Activated naive CD4-positive, alpha-beta T cell treated with anti-CD3 and anti-CD28 coated beads for 36 hours (primary cell): ENCODE measurements at regions of chr1 and their contacts with region 1.

Region 1: DNA sequence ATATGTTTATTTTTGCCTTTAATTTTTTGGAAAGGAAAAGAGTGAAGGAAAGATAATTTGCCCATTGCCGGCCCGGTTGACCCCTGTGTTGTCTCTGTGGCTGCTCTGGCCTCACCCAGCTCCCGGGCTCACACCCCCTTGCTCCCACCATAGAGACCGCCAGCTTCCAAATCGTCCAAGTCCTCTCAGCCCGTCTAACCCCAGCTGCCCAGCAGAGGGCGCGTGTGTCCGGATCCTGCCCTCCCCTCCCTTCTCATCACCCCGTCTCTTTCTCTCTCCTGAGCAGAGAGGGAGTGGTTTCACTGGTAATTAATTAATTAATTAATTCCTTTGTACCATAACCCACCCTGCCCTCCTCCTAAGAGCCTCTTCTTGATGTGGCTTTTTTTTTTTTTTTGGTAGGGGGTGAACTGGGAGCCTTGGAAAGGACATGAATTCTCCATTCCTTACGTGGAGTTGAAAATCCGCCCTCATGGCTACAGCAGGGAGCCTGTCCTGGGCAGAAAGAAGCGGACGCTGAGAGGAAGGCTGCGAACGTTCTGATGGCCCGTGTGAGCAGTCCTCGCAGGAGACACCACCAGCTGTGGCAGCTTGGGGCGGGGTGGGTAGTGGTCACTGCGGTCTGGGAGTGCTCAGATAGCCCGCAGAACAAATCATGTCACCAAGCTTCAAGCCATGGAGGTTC is 45.9 kb downstream of the KIAA0040 start:
- DNase-seq: peak; percentile 80
- H3K4me3 Mint-ChIP-seq: no peak overlapping the region
- H3K27ac Mint-ChIP-seq: no peak overlapping the region
- H3K4me1 Mint-ChIP-seq: peaks cover 2% of the 10 kb centered on the region
- H3K27me3 Mint-ChIP-seq: peaks cover 13% of the 10 kb centered on the region

Region 2: DNA sequence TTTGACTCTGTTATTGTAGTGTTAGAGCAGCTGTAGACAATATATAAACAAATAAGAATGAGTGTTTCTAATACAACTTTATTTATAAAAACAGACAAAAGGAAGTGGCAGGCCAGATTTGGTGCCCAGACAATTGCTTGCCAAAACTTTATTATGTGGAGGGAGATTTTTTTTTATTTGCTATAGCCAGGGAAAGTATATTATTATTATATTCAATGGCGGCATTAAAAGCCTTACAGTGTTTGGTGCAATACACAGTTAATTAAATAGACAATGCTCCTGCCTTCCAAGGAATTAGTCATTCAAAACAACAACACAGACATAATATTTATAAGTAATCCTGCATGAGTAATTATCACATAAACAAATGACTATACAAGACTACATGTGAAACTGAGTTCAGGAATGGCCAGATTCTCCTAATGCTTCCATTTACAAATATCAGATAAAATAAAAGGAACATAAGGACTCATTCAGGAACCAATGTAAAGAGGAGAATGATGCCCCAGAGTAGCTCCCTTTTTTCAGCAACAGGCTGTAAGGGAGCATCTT is 1113.9 kb before region 1 on chr1:
- CTCF ChIA-PET with region 1: no interaction called
- intact Hi-C with region 1: no loop called
- DNase-seq: no peak
- H3K4me3 Mint-ChIP-seq: no peak overlapping the region
- H3K27ac Mint-ChIP-seq: no peak overlapping the region
- H3K4me1 Mint-ChIP-seq: no peaks in the 10 kb centered on the region
- H3K27me3 Mint-ChIP-seq: peaks cover 2% of the 10 kb centered on the region

Region 3: GRCh38 chr1:175129997-175130648 is 16.5 kb before region 1 on chr1:
- CTCF ChIA-PET with region 1: interaction called, 10 read pairs
- intact Hi-C with region 1: no loop called
- DNase-seq: no peak
- H3K4me3 Mint-ChIP-seq: no peak overlapping the region
- H3K27ac Mint-ChIP-seq: no peak overlapping the region
- H3K4me1 Mint-ChIP-seq: no peaks in the 10 kb centered on the region
- H3K27me3 Mint-ChIP-seq: peaks cover 5% of the 10 kb centered on the region

Region 4: DNA sequence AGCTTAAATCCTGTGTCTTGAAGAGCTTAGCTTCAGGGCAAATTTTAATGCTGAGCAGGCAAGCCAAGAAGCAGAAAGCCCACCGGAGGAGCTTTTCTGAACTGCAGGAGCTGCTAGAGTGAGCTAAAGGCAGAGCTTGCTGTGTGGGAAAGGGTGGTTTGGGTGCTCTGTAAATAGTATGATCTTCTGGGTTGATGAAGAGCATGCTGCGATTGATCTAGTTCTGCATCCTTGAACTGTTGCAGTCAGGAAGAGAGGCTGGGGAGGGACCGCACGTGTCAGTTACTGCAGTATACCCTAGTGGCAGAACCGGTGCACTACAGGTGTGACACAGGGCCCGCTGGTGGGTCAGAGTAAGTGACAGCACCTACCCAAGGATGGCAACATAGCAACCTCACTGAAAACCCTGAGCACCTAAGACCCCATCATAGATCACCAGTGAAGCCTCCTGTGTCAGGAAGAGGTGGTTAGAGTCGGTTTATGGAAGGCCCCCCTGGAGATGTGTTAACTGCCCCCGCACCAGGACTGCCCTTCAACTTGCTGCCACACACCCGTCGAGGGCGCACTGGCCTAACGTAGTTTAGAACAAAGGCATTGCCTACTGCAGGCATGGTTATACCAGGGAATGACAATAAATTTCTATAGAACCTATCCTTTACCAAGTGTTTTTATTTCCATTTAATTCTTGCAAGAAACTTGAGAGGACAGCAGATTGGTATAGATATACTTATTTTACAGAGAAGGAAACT is 191.9 kb after region 1 on chr1:
- CTCF ChIA-PET with region 1: interaction called, 30 read pairs
- intact Hi-C with region 1: no loop called
- DNase-seq: peak; percentile 76
- H3K4me3 Mint-ChIP-seq: no peak overlapping the region
- H3K27ac Mint-ChIP-seq: no peak overlapping the region
- H3K4me1 Mint-ChIP-seq: peaks cover 2% of the 10 kb centered on the region
- H3K27me3 Mint-ChIP-seq: no peaks in the 10 kb centered on the region